A549 (cell line): ENCODE measurements at regions of chr17 and their contacts with region 1.

Region 1: DNA sequence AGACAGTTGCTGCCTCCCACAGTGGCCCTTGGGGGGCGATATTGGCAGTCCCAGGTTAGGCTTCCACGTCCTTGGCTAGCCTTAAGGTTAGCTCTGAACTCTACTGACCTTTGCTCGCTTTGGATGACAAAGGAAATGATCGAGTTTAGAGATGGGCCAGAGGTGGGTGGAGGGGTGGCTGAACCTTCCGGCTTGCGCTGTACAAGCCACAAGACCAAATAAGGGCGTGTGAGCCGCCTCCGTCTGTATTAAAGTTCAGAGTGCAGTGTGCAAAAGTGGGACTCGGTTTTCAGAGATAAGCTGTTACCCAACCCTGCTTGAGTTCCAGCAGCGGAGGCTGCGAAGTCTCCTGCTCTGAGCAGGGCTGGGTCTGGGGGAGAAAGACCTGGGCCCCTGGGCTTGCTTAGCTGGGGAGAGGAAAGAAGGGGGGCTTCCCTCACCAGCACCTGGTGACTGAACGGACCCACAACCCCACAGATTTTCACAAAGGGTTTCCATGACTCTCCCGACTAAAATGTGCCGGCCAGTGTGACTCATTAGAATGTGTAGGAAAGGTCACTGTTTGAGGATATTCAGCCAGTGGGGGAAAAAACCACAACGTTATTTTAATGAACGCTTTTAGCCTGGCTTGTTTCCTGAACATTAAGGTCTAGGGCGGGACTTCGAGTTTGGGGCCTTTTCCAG is 67.2 kb downstream of the CENPV start:
- DNase-seq: peak; percentile 99
- ATAC-seq: peak; percentile 88 to 92
- H3K4me3 ChIP-seq: no peak overlapping the region
- H3K27ac ChIP-seq: peak overlapping the region; percentile 96 to 97
- H3K4me1 ChIP-seq: peaks cover 78% of the 10 kb centered on the region
- CTCF ChIP-seq: peak; percentile 88; the same call in 2 of the 3 replicates
- EP300 ChIP-seq: peak; percentile 28 to 79; a peak in 2 of 5 replicates
- POLR2A ChIP-seq: peak; percentile 18; the same call in 1 of the 2 replicates
- RAD21 ChIP-seq: peak; percentile 88 to 89

Region 2: GRCh38 chr17:16013943-16014407 is 272.1 kb before region 1 on chr17:
- CTCF ChIA-PET with region 1: no interaction called
- POLR2A ChIA-PET with region 1: no interaction called
- DNase-seq: peak; percentile 48 to 78
- ATAC-seq: peak; percentile 91 to 97
- H3K4me3 ChIP-seq: no peak overlapping the region
- H3K27ac ChIP-seq: no peak overlapping the region
- H3K4me1 ChIP-seq: peaks cover 28% of the 10 kb centered on the region
- CTCF ChIP-seq: peak; percentile 59
- EP300 ChIP-seq: no peak
- POLR2A ChIP-seq: no peak
- RAD21 ChIP-seq: peak; percentile 34 to 46; a peak in 2 of 5 replicates

Region 3: DNA sequence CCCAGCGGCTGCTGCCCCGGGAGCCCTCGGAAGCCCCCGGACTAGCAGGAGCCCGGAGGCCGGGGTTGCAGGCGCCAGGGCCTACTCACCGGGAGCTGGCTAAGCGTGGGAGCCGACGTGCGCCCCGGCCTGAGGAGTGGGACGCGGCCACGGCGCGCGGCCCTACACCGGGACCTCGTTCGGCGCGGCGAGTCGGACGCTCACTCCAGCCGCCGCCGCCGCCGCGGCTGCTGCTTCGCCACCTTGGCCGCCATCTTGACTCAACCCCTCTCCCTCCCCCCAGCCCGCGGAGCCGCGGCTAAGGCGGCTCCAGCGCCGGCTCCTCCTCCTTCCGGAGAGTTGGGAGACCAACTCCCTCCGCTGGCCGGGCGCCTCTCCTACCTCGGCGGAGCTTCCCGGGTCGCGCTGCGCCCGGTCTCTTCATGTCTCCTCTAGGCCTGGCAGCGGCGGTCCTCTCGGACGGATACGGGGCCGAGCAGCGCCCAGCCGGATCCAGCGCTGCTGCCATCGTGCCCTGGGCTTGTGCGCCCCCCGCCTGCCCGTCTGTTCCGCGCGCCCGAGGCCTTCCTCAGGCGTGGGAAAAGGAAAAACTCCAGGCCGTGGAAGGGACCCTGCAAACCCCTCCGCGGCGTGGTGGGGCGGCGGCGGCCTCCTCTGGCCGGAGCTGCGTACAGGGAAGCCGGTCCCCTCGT is 70.7 kb before region 1 on chr17 and contains the start of gene NCOR1:
- CTCF ChIA-PET with region 1: interaction called, 69 read pairs
- POLR2A ChIA-PET with region 1: interaction called, 57 read pairs
- DNase-seq: peak; percentile 80 to 97
- ATAC-seq: peak; percentile 89 to 92
- H3K4me3 ChIP-seq: peak within 1 kb of the TSS; percentile 75
- H3K27ac ChIP-seq: peak within 1 kb of the TSS; percentile 96 to 97
- H3K4me1 ChIP-seq: peaks cover 34% of the 10 kb centered on the region
- CTCF ChIP-seq: peak; percentile 35; the same call in 2 of the 3 replicates
- EP300 ChIP-seq: no peak
- POLR2A ChIP-seq: peak; percentile 98
- RAD21 ChIP-seq: peak; percentile 30 to 48
- polyA plus RNA-seq, gene NCOR1: 190 and 194 TPM in 2 replicates

Region 4: GRCh38 chr17:16232391-16232790 is 53.7 kb before region 1 on chr17:
- CTCF ChIA-PET with region 1: interaction called, 10 read pairs
- POLR2A ChIA-PET with region 1: no interaction called
- DNase-seq: no peak
- ATAC-seq: no peak
- H3K4me3 ChIP-seq: no peak overlapping the region
- H3K27ac ChIP-seq: no peak overlapping the region
- H3K4me1 ChIP-seq: peaks cover 5% of the 10 kb centered on the region; the same call in 2 of the 3 replicates
- CTCF ChIP-seq: no peak
- EP300 ChIP-seq: no peak
- POLR2A ChIP-seq: no peak
- RAD21 ChIP-seq: no peak

Region 5: DNA sequence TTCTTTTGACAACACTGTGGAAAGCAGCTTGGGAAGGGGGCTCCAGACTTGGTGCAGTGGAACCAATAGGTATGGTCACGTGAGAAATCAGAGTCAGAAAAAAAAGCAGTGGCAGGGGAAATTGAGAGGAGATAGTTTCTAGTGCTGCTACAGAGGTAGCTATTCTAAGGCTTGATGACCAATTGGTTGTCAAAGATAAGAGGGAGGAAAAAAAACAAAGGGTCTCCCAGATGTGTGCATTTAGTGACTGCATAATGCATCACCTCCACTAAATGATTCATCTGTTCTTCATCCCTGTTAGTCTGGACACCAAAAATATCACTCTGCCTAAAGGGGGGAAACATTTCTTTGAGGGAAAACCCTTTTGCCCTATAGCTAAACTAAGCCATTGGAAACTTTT is 12.6 kb before region 1 on chr17:
- CTCF ChIA-PET with region 1: interaction called, 30 read pairs
- POLR2A ChIA-PET with region 1: interaction called, 5 read pairs
- DNase-seq: no peak
- ATAC-seq: peak in 1 of 2 experiments; percentile 66; a peak in 3 of 6 replicates
- H3K4me3 ChIP-seq: no peak overlapping the region
- H3K27ac ChIP-seq: peak overlapping the region in 1 of 2 experiments; percentile 14; a peak in 1 of 6 replicates
- H3K4me1 ChIP-seq: peaks cover 16% of the 10 kb centered on the region; the same call in 1 of the 3 replicates
- CTCF ChIP-seq: no peak
- EP300 ChIP-seq: no peak
- POLR2A ChIP-seq: no peak
- RAD21 ChIP-seq: no peak

Region 6: GRCh38 chr17:16329519-16330271 is 43.6 kb after region 1 on chr17:
- CTCF ChIA-PET with region 1: interaction called, 10 read pairs
- POLR2A ChIA-PET with region 1: interaction called, 8 read pairs
- DNase-seq: peak; percentile 64 to 67
- ATAC-seq: peak; percentile 87 to 88
- H3K4me3 ChIP-seq: 0 out of 3 replicates have a peak overlapping the region, but pooled peaks have one; percentile 5
- H3K27ac ChIP-seq: peak overlapping the region; percentile 62 to 79
- H3K4me1 ChIP-seq: peaks cover 39% of the 10 kb centered on the region
- CTCF ChIP-seq: no peak
- EP300 ChIP-seq: no peak
- POLR2A ChIP-seq: no peak
- RAD21 ChIP-seq: no peak

Region 7: DNA sequence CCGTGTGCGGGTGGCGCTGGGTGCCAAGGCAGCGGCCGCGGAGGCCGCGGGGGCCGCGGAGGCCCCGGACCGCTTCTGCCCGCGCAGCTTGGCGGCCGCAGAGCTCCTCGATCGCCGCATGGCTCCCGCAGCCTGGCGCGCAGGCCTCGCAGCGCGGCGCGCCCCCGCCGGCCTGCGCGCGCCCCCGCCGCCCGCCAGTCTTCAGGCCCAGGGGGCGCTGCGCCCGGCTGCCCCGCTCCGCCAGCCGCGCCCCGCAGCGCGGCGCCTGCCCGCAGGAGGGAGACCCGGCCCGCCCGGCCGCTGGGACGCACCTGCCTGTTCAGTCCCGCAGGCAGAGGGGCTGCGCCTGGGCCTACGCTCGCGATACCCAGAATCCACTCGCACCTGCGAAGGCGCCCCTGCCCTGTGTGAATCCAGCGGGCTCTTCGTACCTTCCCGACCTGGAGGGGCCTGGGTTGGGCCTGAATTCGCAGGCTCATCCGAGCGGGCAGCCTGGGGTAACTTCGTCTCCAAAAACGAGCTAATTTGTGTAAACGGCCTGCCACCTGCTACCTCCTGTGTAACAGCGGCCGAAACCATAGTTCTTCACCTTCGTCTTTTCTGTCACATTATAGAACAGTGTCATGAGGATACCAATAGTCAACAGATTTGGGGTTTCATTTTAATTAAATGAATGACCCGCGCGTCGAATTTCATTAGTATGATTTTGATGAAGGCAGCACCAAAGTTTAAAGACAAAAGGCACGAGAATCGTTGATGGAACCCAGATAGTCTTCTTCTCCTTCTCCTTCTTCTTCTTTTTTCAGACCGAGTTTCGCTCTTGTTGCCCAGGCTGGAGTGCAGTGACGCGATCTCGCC is 67.4 kb after region 1 on chr17 and contains the start of gene CENPV:
- CTCF ChIA-PET with region 1: interaction called, 34 read pairs
- POLR2A ChIA-PET with region 1: interaction called, 57 read pairs
- DNase-seq: peak; percentile 72 to 91
- ATAC-seq: peak; percentile 80 to 89
- H3K4me3 ChIP-seq: peak within 1 kb of the TSS; percentile 71
- H3K27ac ChIP-seq: peak within 1 kb of the TSS; percentile 87 to 96
- H3K4me1 ChIP-seq: peaks cover 12% of the 10 kb centered on the region
- CTCF ChIP-seq: peak; percentile 78
- EP300 ChIP-seq: no peak
- POLR2A ChIP-seq: peak; percentile 82
- RAD21 ChIP-seq: no peak
- polyA plus RNA-seq, gene CENPV: 191 and 202 TPM in 2 replicates

Region 8: GRCh38 chr17:16398270-16399267 is 112.5 kb after region 1 on chr17:
- CTCF ChIA-PET with region 1: no interaction called
- POLR2A ChIA-PET with region 1: no interaction called
- DNase-seq: no peak
- ATAC-seq: peak; percentile 44 to 68; a peak in 4 of 6 replicates
- H3K4me3 ChIP-seq: no peak overlapping the region
- H3K27ac ChIP-seq: peak overlapping the region; percentile 29 to 55; a peak in 4 of 6 replicates
- H3K4me1 ChIP-seq: peaks cover 13% of the 10 kb centered on the region
- CTCF ChIP-seq: no peak
- EP300 ChIP-seq: no peak
- POLR2A ChIP-seq: no peak
- RAD21 ChIP-seq: no peak

Region 9: DNA sequence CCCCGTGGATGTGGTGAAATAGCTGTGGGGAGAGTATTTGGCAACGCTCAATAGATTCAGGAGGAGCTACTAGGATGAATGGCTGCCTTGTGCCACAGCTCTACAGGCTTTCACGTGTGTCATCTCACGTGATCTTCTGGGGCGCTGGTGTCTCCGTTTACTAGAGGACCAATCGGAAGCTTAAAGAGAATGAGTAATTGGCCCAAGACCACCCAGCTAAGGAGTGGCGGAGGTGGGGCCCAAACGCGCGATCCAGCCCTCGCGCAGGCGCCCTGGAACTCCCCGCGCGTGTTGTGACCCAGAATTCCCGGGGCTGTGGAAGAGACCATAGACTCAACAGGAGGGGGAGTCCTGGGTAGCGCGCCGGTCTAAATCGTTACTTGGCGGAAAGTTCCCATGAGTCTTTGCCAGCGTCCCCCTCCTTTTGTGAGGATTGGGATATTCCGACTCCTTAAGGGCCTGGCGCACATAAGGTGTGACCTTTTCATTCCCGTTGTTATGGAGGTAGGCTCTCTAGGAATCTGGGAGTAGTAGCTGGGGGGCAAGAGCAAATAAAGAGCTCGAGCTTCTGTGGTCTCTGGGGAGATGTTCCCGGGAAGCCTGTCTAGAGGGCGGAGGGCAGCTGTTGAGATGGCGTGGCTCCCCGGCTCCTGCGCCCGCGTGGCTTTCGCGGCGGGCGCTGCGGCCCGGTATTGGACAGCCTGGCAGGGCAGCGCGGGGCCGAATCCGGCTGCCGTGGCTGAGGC is 152.6 kb after region 1 on chr17:
- CTCF ChIA-PET with region 1: interaction called, 7 read pairs
- POLR2A ChIA-PET with region 1: interaction called, 29 read pairs
- DNase-seq: peak; percentile 100
- ATAC-seq: peak; percentile 84 to 89
- H3K4me3 ChIP-seq: peak overlapping the region; percentile 75
- H3K27ac ChIP-seq: peak overlapping the region; percentile 90 to 99
- H3K4me1 ChIP-seq: peaks cover 37% of the 10 kb centered on the region
- CTCF ChIP-seq: no peak
- EP300 ChIP-seq: no peak
- POLR2A ChIP-seq: peak; percentile 96
- RAD21 ChIP-seq: no peak; a peak in 1 of 5 replicates